ENCODE measurements at regions of chr11 and their contacts with region 1.

Region 1: GRCh38 chr11:111777094-111778046 is 11.2 kb upstream of the PPP2R1B start:
- DNase-seq: peak in 4 of 5 donors; percentile 51 to 63 (median 60)
- H3K4me3 ChIP-seq: no peak overlapping the region
- H3K4me3 Mint-ChIP-seq: no peak overlapping the region
- H3K27ac ChIP-seq: no peak overlapping the region
- H3K27ac Mint-ChIP-seq: no peak overlapping the region
- H3K4me1 ChIP-seq: no peaks in the 10 kb centered on the region
- H3K4me1 Mint-ChIP-seq: no peaks in the 10 kb centered on the region
- H3K27me3 ChIP-seq: no peaks in the 10 kb centered on the region
- H3K27me3 Mint-ChIP-seq: no peaks in the 10 kb centered on the region

Region 2: DNA sequence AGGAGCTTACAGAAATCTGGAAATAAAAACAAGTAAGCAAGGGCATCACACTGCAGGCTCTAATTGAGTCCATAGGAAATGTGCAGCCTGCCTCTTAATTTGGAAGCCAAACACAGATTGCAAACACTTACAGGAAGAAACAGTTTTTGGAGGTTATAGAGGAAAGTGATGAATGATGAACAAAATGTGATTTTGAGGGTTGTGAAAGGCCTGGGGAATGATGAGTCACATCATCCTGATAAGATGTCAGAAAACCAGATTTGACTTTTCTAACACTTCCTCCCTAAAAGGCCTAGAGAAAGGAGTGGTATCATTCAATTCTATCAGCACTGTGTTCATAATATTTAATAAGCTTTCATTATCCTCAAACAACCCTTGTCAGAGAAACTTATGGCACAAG is 628.4 kb before region 1 on chr11:
- CTCF ChIA-PET with region 1: no interaction called
- POLR2A ChIA-PET with region 1: no interaction called
- intact Hi-C with region 1: no loop called
- DNase-seq: no peak
- H3K4me3 ChIP-seq: no peak overlapping the region
- H3K4me3 Mint-ChIP-seq: no peak overlapping the region
- H3K27ac ChIP-seq: no peak overlapping the region
- H3K27ac Mint-ChIP-seq: no peak overlapping the region
- H3K4me1 ChIP-seq: no peaks in the 10 kb centered on the region
- H3K4me1 Mint-ChIP-seq: no peaks in the 10 kb centered on the region
- H3K27me3 ChIP-seq: no peaks in the 10 kb centered on the region
- H3K27me3 Mint-ChIP-seq: peaks cover 0 to 1% of the 10 kb centered on the region in 2 donors

Region 3: DNA sequence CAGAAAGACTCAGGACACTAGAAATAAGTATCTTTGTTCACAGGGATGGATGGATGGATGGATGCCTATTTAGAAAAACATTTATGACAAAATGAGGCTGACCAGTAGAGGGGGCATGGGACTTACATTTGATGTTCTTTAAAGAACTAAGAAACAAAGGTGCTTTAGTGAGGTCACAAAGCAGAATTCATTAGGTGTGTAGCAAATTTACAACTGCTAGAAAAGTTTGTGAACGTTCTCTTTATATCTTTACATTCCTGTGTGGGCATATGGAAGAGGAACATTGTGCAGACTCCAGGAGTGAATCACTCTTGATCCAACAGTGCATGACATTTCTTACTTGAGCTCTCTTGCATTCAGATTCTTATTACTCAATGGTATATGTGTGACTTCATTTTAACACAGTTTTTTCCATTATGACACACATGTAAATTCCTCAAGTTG is 191.0 kb before region 1 on chr11:
- CTCF ChIA-PET with region 1: interaction called, 160 read pairs
- POLR2A ChIA-PET with region 1: interaction called, 3 read pairs
- intact Hi-C with region 1: loop called (anchors 1 kb)
- DNase-seq: peak; percentile 51 to 62 (median 59)
- H3K4me3 ChIP-seq: no peak overlapping the region
- H3K4me3 Mint-ChIP-seq: no peak overlapping the region
- H3K27ac ChIP-seq: no peak overlapping the region
- H3K27ac Mint-ChIP-seq: no peak overlapping the region
- H3K4me1 ChIP-seq: no peaks in the 10 kb centered on the region
- H3K4me1 Mint-ChIP-seq: no peaks in the 10 kb centered on the region
- H3K27me3 ChIP-seq: no peaks in the 10 kb centered on the region
- H3K27me3 Mint-ChIP-seq: peaks cover 1 to 3% of the 10 kb centered on the region in 2 donors

Region 4: DNA sequence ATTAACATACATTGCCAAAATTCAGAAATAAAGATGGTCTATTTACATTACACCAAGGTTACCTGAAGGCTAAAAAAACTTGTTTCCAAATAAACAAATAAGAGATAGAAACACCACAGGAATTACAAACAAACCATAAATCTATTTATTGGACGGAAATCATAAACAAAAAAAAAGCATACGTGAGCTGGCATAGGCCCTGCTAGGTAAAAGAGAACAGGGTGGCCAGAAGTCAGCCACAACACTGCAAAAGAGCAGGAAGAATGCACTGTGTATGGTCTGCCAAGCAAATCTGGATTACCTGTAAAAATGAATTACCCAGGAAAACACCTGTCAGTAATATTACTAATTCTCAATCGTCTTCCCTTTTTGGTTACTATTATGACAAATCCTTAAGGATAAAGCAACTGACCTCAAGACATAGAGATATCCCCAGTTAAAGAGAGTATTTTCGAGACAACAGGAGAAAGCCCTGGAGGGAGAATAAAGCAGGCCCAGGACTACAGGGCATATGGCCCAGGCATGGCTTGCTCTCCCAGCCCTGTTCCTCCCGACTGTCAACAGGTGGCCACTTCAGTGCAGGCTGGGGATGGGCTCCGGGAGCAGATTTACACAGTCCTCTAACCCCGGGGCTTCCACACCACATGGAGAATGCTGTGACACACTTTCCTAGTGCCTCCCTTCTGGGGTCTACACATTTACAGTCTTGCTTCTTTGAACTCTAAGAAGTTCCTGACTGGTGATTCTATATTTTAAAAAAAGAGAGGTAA is 29.1 kb before region 1 on chr11:
- CTCF ChIA-PET with region 1: interaction called, 20 read pairs
- POLR2A ChIA-PET with region 1: no interaction called
- intact Hi-C with region 1: no loop called
- DNase-seq: no peak
- H3K4me3 ChIP-seq: no peak overlapping the region
- H3K4me3 Mint-ChIP-seq: no peak overlapping the region
- H3K27ac ChIP-seq: no peak overlapping the region
- H3K27ac Mint-ChIP-seq: peak overlapping the region in 2 of 7 donors; percentile 20 to 42
- H3K4me1 ChIP-seq: no peaks in the 10 kb centered on the region
- H3K4me1 Mint-ChIP-seq: peaks cover 0 to 13% (median 1%) of the 10 kb centered on the region in 4 donors
- H3K27me3 ChIP-seq: no peaks in the 10 kb centered on the region
- H3K27me3 Mint-ChIP-seq: no peaks in the 10 kb centered on the region

Region 5: DNA sequence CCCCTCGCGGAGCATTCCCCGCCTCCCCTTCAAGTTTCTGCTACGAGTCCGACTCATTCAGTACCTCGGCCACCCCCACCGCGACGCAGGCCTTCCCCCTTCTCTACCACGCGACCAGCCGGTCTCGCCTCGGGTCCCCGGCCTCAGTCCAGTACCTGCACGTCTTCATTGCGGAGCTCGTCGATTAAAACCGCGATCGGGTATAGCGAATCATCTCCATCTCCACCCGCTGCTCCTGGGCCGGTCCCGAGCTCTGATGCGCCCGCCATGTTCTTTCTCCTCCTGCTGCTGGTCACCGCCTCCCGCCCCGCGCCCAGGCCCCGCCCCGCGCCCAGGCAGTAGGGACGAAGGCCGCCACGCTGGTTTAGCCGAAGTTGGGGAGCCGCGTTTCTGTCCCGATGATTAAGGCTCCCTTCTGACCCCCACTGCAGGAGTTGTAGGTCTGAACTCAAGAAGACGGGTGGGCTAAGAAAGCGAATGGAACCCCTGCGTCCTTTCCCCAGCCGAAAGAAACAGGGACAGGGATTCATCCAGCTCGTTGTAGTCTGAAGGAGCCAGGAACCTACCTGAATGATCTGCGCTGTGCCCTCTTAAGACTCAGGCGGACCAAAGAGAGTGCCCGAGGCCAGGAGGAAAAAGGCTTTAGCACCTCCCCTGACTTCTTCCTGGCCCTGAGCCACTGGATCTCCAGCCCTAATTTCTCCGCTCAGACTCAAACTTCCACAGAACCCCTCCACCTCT is 11.1 kb before region 1 on chr11 and contains the start of gene PPP2R1B:
- CTCF ChIA-PET with region 1: interaction called, 103 read pairs
- POLR2A ChIA-PET with region 1: interaction called, 5 read pairs
- intact Hi-C with region 1: no loop called
- DNase-seq: peak; percentile 71 to 78 (median 75)
- H3K4me3 ChIP-seq: peak within 1 kb of the TSS; percentile 64 to 92
- H3K4me3 Mint-ChIP-seq: peak within 1 kb of the TSS; percentile 93 to 100 (median 100)
- H3K27ac ChIP-seq: peak within 1 kb of the TSS; percentile 84
- H3K27ac Mint-ChIP-seq: peak within 1 kb of the TSS; percentile 65 to 100 (median 99)
- H3K4me1 ChIP-seq: peaks cover 24% of the 10 kb centered on the region
- H3K4me1 Mint-ChIP-seq: peaks cover 29 to 50% (median 36%) of the 10 kb centered on the region in 4 donors
- H3K27me3 ChIP-seq: no peaks in the 10 kb centered on the region
- H3K27me3 Mint-ChIP-seq: peaks cover 0 to 2% of the 10 kb centered on the region in 2 donors
- total RNA-seq, gene PPP2R1B: 38.9 to 39.1 TPM

Measured in CD4-positive, alpha-beta memory T cell (primary cell).